ENCODE measurements at regions of chr1 and their contacts with region 1.

Region 1: GRCh38 chr1:161749509-161750407 is at the start of gene DUSP12:
- DNase-seq: peak; percentile 87
- ATAC-seq: peak; percentile 99
- H3K4me3 Mint-ChIP-seq: peak within 1 kb of the TSS; percentile 100
- H3K27ac Mint-ChIP-seq: peak within 1 kb of the TSS; percentile 96
- H3K4me1 Mint-ChIP-seq: peaks cover 35% of the 10 kb centered on the region
- H3K27me3 Mint-ChIP-seq: peaks cover 5% of the 10 kb centered on the region
- CTCF ChIP-seq: no peak
- total RNA-seq, gene DUSP12: 37.2 and 38.9 TPM in 2 replicates

Region 2: GRCh38 chr1:161531986-161532643 is 217.6 kb before region 1 on chr1:
- CTCF ChIA-PET with region 1: no interaction called
- POLR2A ChIA-PET with region 1: interaction called, 10 read pairs
- intact Hi-C with region 1: no loop called
- DNase-seq: no peak
- ATAC-seq: no peak
- H3K4me3 Mint-ChIP-seq: peak overlapping the region; percentile 35
- H3K27ac Mint-ChIP-seq: no peak overlapping the region
- H3K4me1 Mint-ChIP-seq: peaks cover 22% of the 10 kb centered on the region
- H3K27me3 Mint-ChIP-seq: peaks cover 5% of the 10 kb centered on the region
- CTCF ChIP-seq: no peak

Region 3: DNA sequence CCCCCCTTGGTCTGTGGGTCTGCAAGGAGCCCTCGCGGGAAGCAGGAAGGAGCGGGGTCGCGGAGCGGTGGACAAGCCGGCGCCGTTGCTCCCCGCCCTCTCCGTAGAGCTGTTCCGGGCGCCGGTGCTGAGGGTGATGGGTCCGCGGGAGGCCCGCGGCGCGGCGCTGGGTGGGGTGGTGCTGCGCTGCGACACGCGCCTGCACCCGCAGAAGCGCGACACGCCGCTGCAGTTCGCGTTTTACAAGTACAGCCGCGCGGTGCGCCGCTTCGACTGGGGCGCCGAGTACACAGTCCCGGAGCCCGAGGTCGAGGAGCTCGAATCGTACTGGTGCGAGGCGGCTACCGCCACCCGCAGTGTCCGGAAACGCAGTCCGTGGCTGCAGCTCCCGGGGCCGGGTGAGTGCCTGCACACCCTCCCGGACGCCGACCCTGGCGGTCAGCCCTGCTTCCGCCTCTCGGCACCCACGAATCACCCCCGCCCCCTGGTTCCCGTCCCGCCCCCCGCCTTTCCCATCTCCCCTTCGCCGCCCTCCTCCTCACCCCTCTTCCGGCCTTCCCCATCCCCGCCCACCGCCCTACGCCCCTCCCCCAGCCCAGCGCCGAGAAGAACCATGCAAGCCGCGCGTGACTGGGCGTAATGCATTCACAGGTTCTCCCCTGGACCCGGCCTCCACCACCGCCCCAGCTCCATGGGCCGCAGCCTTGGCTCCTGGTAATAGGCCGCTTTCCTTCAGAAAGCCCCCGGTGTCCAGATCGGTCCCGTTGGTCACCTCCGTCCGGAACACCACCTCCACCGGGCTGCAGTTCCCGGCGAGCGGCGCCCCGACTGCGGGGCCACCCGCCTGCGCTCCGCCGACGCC is 22.9 kb before region 1 on chr1:
- CTCF ChIA-PET with region 1: no interaction called
- POLR2A ChIA-PET with region 1: interaction called, 14 read pairs
- intact Hi-C with region 1: no loop called
- DNase-seq: peak; percentile 70
- ATAC-seq: peak; percentile 72
- H3K4me3 Mint-ChIP-seq: peak overlapping the region; percentile 96
- H3K27ac Mint-ChIP-seq: peak overlapping the region; percentile 94
- H3K4me1 Mint-ChIP-seq: peaks cover 61% of the 10 kb centered on the region
- H3K27me3 Mint-ChIP-seq: no peaks in the 10 kb centered on the region
- CTCF ChIP-seq: no peak

Region 4: DNA sequence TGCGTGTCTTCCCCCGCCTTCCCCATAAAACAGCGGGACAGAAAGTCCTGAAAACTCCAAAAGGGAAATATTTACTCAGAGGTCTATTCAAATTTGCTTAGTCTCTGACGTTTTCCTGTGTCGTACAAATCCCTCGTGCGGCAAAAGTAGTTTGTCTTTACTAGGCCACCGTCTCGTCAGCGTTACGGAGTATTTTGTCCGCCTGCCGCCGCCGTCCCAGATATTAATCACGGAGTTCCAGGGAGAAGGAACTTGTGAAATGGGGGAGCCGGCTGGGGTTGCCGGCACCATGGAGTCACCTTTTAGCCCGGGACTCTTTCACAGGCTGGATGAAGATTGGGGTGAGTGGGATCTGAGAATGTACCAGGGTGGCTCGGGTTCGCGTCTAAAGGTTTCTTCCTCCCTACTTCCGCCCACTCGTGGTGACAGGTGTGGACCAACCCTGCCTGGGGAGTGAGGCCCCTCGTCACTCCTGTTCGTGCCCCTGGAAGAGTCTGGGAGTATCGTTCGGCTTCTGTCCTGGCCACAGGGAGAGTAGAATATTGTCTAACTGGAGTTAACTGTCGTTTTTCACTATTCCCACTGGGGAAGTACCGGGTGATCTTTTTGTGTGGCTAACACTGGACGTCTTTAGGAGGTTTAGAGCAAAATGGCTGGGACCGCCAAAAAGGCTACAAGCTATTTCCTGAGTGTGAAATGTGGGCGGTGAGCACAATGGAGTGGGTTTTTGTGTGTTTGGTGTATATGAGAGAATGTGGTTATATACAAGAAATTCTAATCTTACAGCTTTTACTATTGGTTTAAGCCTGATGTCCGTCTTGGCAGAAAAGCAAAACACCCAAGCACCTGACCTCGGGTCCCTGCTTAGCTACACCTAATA is 16.6 kb after region 1 on chr1 and contains the start of gene ATF6:
- CTCF ChIA-PET with region 1: interaction called, 15 read pairs
- POLR2A ChIA-PET with region 1: interaction called, 8 read pairs
- intact Hi-C with region 1: loop called (anchors 1 kb)
- DNase-seq: peak; percentile 71
- ATAC-seq: peak; percentile 78
- H3K4me3 Mint-ChIP-seq: peak within 1 kb of the TSS; percentile 99
- H3K27ac Mint-ChIP-seq: peak within 1 kb of the TSS; percentile 95
- H3K4me1 Mint-ChIP-seq: peaks cover 46% of the 10 kb centered on the region
- H3K27me3 Mint-ChIP-seq: no peaks in the 10 kb centered on the region
- CTCF ChIP-seq: no peak
- total RNA-seq, gene ATF6: 23.7 and 24.6 TPM in 2 replicates

Region 5: DNA sequence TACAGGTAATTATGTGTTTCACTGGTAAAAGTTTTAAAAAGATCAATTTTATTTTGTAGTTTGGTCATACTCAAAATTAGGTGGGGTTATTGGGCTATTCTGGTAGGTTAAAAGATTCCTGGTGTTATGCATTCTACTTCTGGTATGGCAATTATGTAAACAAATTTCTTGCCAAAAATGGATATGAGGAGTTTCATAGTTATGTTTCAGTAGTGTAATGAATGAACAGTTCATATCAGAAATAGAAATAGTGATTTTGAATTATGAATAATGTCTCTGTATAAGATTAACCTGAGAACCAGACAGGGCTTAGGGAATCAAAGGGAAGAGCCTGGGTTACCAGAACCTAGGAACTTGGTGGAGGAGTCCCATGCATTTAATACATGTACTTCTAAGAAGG is 32.2 kb after region 1 on chr1:
- CTCF ChIA-PET with region 1: no interaction called
- POLR2A ChIA-PET with region 1: no interaction called
- intact Hi-C with region 1: no loop called
- DNase-seq: no peak
- ATAC-seq: no peak
- H3K4me3 Mint-ChIP-seq: no peak overlapping the region
- H3K27ac Mint-ChIP-seq: no peak overlapping the region
- H3K4me1 Mint-ChIP-seq: no peaks in the 10 kb centered on the region
- H3K27me3 Mint-ChIP-seq: no peaks in the 10 kb centered on the region
- CTCF ChIP-seq: no peak